Dendritic cell treated with granulocyte-macrophage colony-stimulating factor and Interleukin-4, amounts not matched to agents 40 ng/mL and 50 ng/mL, for 4 days (primary cell): ENCODE measurements at regions of chr11 and their contacts with region 1.

Region 1: GRCh38 chr11:90288212-90288821 is 65.5 kb upstream of the CHORDC1 start:
- H3K4me3 Mint-ChIP-seq: no peak overlapping the region
- H3K27ac Mint-ChIP-seq: no peak overlapping the region
- H3K4me1 Mint-ChIP-seq: peaks cover 4% of the 10 kb centered on the region
- H3K27me3 Mint-ChIP-seq: no peaks in the 10 kb centered on the region

Region 2: GRCh38 chr11:90134478-90135003 is 153.8 kb before region 1 on chr11 and contains the start of gene NAALAD2:
- intact Hi-C with region 1: no loop called
- H3K4me3 Mint-ChIP-seq: no peak within 1 kb of the TSS
- H3K27ac Mint-ChIP-seq: no peak within 1 kb of the TSS
- H3K4me1 Mint-ChIP-seq: peaks cover 11% of the 10 kb centered on the region
- H3K27me3 Mint-ChIP-seq: peaks cover 31% of the 10 kb centered on the region

Region 3: GRCh38 chr11:90192869-90193582 is 95.3 kb before region 1 on chr11:
- intact Hi-C with region 1: no loop called
- H3K4me3 Mint-ChIP-seq: no peak overlapping the region
- H3K27ac Mint-ChIP-seq: no peak overlapping the region
- H3K4me1 Mint-ChIP-seq: no peaks in the 10 kb centered on the region
- H3K27me3 Mint-ChIP-seq: no peaks in the 10 kb centered on the region

Region 4: GRCh38 chr11:90434858-90435257 is 146.5 kb after region 1 on chr11:
- intact Hi-C with region 1: loop called (anchors 1 kb)
- H3K4me3 Mint-ChIP-seq: no peak overlapping the region
- H3K27ac Mint-ChIP-seq: no peak overlapping the region
- H3K4me1 Mint-ChIP-seq: no peaks in the 10 kb centered on the region
- H3K27me3 Mint-ChIP-seq: no peaks in the 10 kb centered on the region

Region 5: GRCh38 chr11:90453525-90453924 is 165.2 kb after region 1 on chr11:
- intact Hi-C with region 1: loop called (anchors 5 kb)
- H3K4me3 Mint-ChIP-seq: no peak overlapping the region
- H3K27ac Mint-ChIP-seq: no peak overlapping the region
- H3K4me1 Mint-ChIP-seq: no peaks in the 10 kb centered on the region
- H3K27me3 Mint-ChIP-seq: peaks cover 2% of the 10 kb centered on the region